ENCODE measurements at regions of chr10 and their contacts with region 1.

Region 1: GRCh38 chr10:97676770-97677581 is 10.1 kb downstream of the AVPI1 start:
- DNase-seq: no peak
- H3K4me3 ChIP-seq: no peak overlapping the region
- H3K27me3 ChIP-seq: no peaks in the 10 kb centered on the region
- CTCF ChIP-seq: peak; percentile 87

Region 2: DNA sequence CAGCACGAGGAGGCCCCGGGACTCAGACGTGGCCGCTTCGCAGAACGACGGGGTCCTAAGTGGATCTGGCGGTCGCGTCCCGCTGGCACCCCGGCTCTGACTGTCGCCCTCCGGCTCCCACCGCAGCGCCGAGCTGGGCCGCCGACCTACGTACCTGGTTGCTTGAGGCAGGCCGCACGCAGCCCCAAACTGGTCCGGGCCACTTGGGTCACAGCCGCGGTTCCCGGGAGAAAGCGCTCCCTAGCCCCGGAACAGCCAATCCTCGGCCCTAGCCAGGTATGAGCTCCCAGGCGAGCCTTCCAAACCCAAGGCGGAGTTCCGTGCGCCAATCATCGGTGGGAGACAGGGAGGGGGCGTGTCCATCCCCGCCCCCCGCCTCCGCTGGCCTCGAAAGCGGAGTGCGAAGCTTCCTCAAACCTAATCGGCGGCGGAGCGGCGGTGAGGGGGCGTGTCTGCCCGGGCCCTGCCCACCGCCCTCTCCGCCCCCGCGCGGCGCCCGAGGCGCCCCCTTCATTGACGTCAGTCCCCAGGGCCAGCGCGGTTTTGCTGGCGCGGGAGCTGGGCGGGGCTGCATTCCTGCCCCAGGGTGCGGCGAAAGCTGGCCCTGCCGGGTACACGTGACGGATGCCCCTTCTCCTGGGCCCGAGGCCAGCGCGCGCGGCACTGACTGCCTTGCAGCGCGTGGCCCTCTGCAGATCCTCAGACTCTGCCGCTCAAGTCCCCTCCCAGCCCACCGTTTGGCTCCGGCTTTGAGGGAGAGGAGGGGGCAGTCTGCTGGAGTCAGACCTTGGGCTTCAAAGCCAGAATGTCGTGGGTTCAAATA is 10.2 kb after region 1 on chr10 and contains the start of gene AVPI1:
- CTCF ChIA-PET with region 1: interaction called, 62 read pairs
- POLR2A ChIA-PET with region 1: no interaction called
- DNase-seq: peak; percentile 92
- H3K4me3 ChIP-seq: peak within 1 kb of the TSS; percentile 76
- H3K27me3 ChIP-seq: no peaks in the 10 kb centered on the region
- CTCF ChIP-seq: no peak
- polyA plus RNA-seq, gene AVPI1: 32.4 and 32.7 TPM in 2 replicates

Region 3: GRCh38 chr10:97707153-97707861 is 30.3 kb after region 1 on chr10:
- CTCF ChIA-PET with region 1: interaction called, 30 read pairs
- POLR2A ChIA-PET with region 1: interaction called, 3 read pairs
- DNase-seq: no peak
- H3K4me3 ChIP-seq: no peak overlapping the region
- H3K27me3 ChIP-seq: no peaks in the 10 kb centered on the region; the same call in 1 of the 2 replicates
- CTCF ChIP-seq: no peak

Region 4: GRCh38 chr10:97724341-97724941 is 47.5 kb after region 1 on chr10:
- CTCF ChIA-PET with region 1: interaction called, 99 read pairs
- POLR2A ChIA-PET with region 1: no interaction called
- DNase-seq: no peak
- H3K4me3 ChIP-seq: no peak overlapping the region
- H3K27me3 ChIP-seq: no peaks in the 10 kb centered on the region
- CTCF ChIP-seq: no peak

Measured in BJ (cell line).